Pancreas (tissue), 10 donors: ENCODE measurements at regions of chr17 and their contacts with region 1.

Region 1: DNA sequence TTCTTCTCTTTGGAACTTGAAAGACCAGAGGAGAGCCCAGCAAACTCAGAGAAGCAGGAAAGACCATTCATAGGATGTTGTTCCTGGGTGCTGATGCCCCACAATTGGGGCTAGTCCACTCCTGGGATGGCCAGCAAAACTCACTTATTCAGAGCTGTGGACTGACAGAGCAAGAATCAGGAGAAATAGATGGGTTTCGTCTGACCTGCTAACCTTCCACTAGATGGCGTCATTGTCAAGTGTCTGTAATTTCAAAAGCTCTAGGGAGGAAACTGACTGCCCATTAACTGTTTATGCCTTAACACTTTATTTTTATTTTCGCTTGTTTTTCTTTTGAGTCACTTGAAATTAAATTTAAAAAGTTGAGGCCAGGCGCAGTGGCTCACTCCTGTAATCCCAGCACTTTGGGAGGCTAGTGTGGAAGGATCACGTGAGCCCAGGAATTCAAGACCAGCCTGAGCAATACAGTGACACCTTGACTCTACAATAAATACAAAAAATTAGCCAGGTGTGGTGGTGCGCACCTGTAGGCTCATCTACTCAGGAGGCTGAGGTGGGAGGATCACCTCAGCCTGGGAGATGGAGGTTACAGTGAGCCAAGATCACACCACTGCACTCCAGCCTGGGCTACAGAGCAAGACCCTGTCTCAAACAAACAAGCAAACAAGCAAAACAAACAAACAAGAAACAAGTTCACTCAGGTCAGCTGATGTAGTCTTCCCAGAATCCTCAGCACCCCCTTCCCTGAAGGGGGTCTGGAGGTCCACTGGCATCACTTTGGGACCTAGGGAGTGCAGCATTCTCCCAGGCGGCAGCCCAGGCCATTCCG is 28.6 kb upstream of the MILR1 start:
- DNase-seq: peak in 2 of 6 donors; percentile 8 to 25
- ATAC-seq: peak; percentile 87 to 94 (median 92)
- H3K4me3 ChIP-seq: no peak overlapping the region
- H3K27ac ChIP-seq: no peak overlapping the region
- H3K4me1 ChIP-seq: no peaks in the 10 kb centered on the region
- H3K27me3 ChIP-seq: no peaks in the 10 kb centered on the region
- CTCF ChIP-seq: peak; percentile 21 to 73 (median 56)

Region 2: GRCh38 chr17:64315032-64315490 is 105.3 kb before region 1 on chr17:
- intact Hi-C with region 1: loop called in 1 of 3 experiments (anchors 5 kb)
- DNase-seq: peak in 4 of 6 donors; percentile 59 to 76 (median 62)
- ATAC-seq: peak; percentile 48 to 77 (median 72)
- H3K4me3 ChIP-seq: no peak overlapping the region
- H3K27ac ChIP-seq: peak overlapping the region in 1 of 4 donors; percentile 33
- H3K4me1 ChIP-seq: no peaks in the 10 kb centered on the region
- H3K27me3 ChIP-seq: no peaks in the 10 kb centered on the region
- CTCF ChIP-seq: no peak

Region 3: GRCh38 chr17:64736804-64737492 is 316.6 kb after region 1 on chr17:
- intact Hi-C with region 1: loop called in 1 of 3 experiments (anchors 10 kb)
- DNase-seq: peak in 2 of 6 donors; percentile 12 to 45
- ATAC-seq: peak; percentile 66 to 81 (median 75)
- H3K4me3 ChIP-seq: no peak overlapping the region
- H3K27ac ChIP-seq: no peak overlapping the region
- H3K4me1 ChIP-seq: peaks cover 0 to 5% (median 0%) of the 10 kb centered on the region in 3 donors
- H3K27me3 ChIP-seq: no peaks in the 10 kb centered on the region
- CTCF ChIP-seq: peak in 3 of 4 donors; percentile 19 to 45 (median 34)